Endothelial cell of umbilical vein (primary cell): ENCODE measurements at regions of chr2 and their contacts with region 1.

Region 1: DNA sequence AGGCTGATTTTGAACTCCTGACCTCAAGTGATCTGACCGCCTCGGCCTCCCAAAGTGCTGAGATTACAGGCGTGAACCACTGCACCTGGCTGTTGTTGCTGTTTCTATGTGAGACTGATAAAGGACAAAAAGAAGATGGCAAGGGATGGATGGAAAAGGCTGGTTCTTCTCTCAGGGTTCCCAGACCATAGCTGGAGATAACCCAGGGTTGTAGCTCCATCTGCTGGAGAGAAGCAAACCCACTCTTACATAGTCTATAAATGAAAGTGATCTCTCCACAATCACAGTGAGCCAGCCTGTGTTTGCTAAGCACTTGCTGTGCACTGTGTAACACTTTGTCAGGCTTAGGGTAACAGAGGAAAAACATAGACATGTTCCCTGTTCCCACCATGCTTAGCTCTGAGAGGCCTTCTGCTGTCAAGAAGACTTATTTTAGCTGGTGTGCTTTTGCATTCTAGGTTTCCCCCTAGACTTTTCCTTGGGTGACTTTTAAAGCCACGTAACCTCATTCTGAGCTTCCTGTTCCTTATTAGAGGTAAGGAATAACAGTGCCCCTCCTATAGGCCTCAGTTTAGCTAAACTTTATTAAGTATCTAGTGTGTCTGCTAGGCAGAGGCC is 49.7 kb downstream of the LIMS1 start:
- DNase-seq: peak; percentile 83
- H3K4me3 ChIP-seq: no peak overlapping the region
- H3K27ac ChIP-seq: peak overlapping the region; percentile 3
- H3K4me1 ChIP-seq: peaks cover 63% of the 10 kb centered on the region
- H3K27me3 ChIP-seq: no peaks in the 10 kb centered on the region
- CTCF ChIP-seq: peak; percentile 69 to 76
- POLR2A ChIP-seq: no peak

Region 2: DNA sequence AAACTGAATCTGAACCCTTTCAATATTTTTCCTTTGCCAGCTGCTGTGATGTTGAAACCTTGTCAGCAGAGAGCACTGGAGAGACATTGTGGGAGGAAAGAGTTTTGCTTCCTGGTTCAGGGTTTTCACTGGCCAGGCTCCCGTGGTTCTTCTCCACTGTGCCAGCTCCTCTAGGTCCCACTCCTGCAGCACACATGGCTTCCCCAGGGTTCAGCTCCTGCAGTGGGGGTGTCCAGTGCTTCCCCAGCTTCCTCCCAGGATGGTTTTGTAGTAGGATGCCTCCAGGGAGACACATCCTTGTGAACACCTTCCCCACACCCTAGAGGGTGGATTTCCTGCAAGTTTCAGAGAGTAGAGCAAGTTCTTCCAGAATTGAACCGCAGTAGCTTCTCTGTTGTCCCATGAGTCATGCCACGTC is 368.2 kb before region 1 on chr2:
- CTCF ChIA-PET with region 1: no interaction called
- POLR2A ChIA-PET with region 1: no interaction called
- dilution Hi-C with region 1: no loop called
- intact Hi-C with region 1: loop called (anchors 10 kb)
- DNase-seq: no peak
- H3K4me3 ChIP-seq: no peak overlapping the region
- H3K27ac ChIP-seq: no peak overlapping the region
- H3K4me1 ChIP-seq: no peaks in the 10 kb centered on the region
- H3K27me3 ChIP-seq: no peaks in the 10 kb centered on the region
- CTCF ChIP-seq: no peak
- POLR2A ChIP-seq: no peak

Region 3: DNA sequence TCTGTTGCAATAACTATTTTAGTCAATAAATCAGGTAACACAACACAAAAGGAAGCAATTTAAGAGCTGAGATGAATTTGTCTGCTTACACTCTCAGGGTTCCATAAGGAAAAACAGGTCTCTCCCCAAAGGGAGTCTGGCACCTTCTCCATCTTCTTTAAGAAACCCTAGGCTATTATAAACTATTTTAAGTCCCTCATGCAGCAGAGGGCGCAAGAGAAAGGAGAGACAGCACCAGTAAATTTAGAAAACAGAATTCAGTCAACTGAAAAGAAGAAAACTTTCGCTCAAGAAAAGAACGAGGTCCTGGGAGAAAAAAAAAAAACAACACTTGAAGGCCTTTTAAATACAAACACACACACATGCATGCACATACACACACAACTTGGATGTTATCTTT is 187.2 kb before region 1 on chr2:
- CTCF ChIA-PET with region 1: interaction called, 29 read pairs
- POLR2A ChIA-PET with region 1: no interaction called
- dilution Hi-C with region 1: no loop called
- intact Hi-C with region 1: loop called (anchors 1 kb)
- DNase-seq: peak; percentile 52
- H3K4me3 ChIP-seq: no peak overlapping the region
- H3K27ac ChIP-seq: no peak overlapping the region
- H3K4me1 ChIP-seq: no peaks in the 10 kb centered on the region
- H3K27me3 ChIP-seq: peaks cover 0 to 2% of the 10 kb centered on the region in 2 experiments
- CTCF ChIP-seq: peak in 1 of 2 donors; percentile 23
- POLR2A ChIP-seq: no peak

Region 4: GRCh38 chr2:108485253-108485652 is 98.8 kb before region 1 on chr2:
- CTCF ChIA-PET with region 1: interaction called, 4 read pairs
- POLR2A ChIA-PET with region 1: no interaction called
- dilution Hi-C with region 1: no loop called
- intact Hi-C with region 1: loop called (anchors 5 kb)
- DNase-seq: no peak
- H3K4me3 ChIP-seq: no peak overlapping the region
- H3K27ac ChIP-seq: no peak overlapping the region
- H3K4me1 ChIP-seq: no peaks in the 10 kb centered on the region
- H3K27me3 ChIP-seq: no peaks in the 10 kb centered on the region
- CTCF ChIP-seq: no peak
- POLR2A ChIP-seq: no peak

Region 5: GRCh38 chr2:108542071-108542470 is 41.9 kb before region 1 on chr2:
- CTCF ChIA-PET with region 1: interaction called, 13 read pairs
- POLR2A ChIA-PET with region 1: no interaction called
- dilution Hi-C with region 1: no loop called
- intact Hi-C with region 1: loop called (anchors 2 kb)
- DNase-seq: no peak
- H3K4me3 ChIP-seq: no peak overlapping the region
- H3K27ac ChIP-seq: peak overlapping the region; percentile 50
- H3K4me1 ChIP-seq: peaks cover 20% of the 10 kb centered on the region
- H3K27me3 ChIP-seq: no peaks in the 10 kb centered on the region
- CTCF ChIP-seq: no peak
- POLR2A ChIP-seq: no peak

Region 6: GRCh38 chr2:108594132-108594981 is 10.3 kb after region 1 on chr2:
- CTCF ChIA-PET with region 1: interaction called, 25 read pairs
- POLR2A ChIA-PET with region 1: interaction called, 7 read pairs
- dilution Hi-C with region 1: no loop called
- intact Hi-C with region 1: loop called (anchors 1 kb)
- DNase-seq: peak; percentile 91
- H3K4me3 ChIP-seq: peak overlapping the region in 1 of 3 experiments; percentile 48
- H3K27ac ChIP-seq: peak overlapping the region; percentile 99
- H3K4me1 ChIP-seq: peaks cover 59% of the 10 kb centered on the region
- H3K27me3 ChIP-seq: no peaks in the 10 kb centered on the region
- CTCF ChIP-seq: no peak
- POLR2A ChIP-seq: peak; percentile 79

Region 7: GRCh38 chr2:108643261-108643849 is 59.3 kb after region 1 on chr2:
- CTCF ChIA-PET with region 1: no interaction called
- POLR2A ChIA-PET with region 1: no interaction called
- dilution Hi-C with region 1: no loop called
- intact Hi-C with region 1: no loop called
- DNase-seq: no peak
- H3K4me3 ChIP-seq: no peak overlapping the region
- H3K27ac ChIP-seq: no peak overlapping the region
- H3K4me1 ChIP-seq: peaks cover 19% of the 10 kb centered on the region
- H3K27me3 ChIP-seq: no peaks in the 10 kb centered on the region
- CTCF ChIP-seq: no peak
- POLR2A ChIP-seq: no peak

Region 8: GRCh38 chr2:109466673-109467575 is 882.9 kb after region 1 on chr2:
- CTCF ChIA-PET with region 1: no interaction called
- POLR2A ChIA-PET with region 1: no interaction called
- dilution Hi-C with region 1: no loop called
- intact Hi-C with region 1: no loop called
- DNase-seq: peak; percentile 42
- H3K4me3 ChIP-seq: no peak overlapping the region
- H3K27ac ChIP-seq: no peak overlapping the region
- H3K4me1 ChIP-seq: peaks cover 15% of the 10 kb centered on the region
- H3K27me3 ChIP-seq: no peaks in the 10 kb centered on the region
- CTCF ChIP-seq: no peak
- POLR2A ChIP-seq: no peak